ENCODE measurements at regions of chr2 and their contacts with region 1.

Region 1: GRCh38 chr2:54665436-54665856 is 58.0 kb upstream of the EML6 start:
- DNase-seq: peak; percentile 65
- ATAC-seq: peak; percentile 77
- H3K4me3 Mint-ChIP-seq: no peak overlapping the region
- H3K27ac Mint-ChIP-seq: peak overlapping the region; percentile 43
- H3K4me1 Mint-ChIP-seq: peaks cover 14% of the 10 kb centered on the region
- H3K27me3 Mint-ChIP-seq: no peaks in the 10 kb centered on the region

Region 2: DNA sequence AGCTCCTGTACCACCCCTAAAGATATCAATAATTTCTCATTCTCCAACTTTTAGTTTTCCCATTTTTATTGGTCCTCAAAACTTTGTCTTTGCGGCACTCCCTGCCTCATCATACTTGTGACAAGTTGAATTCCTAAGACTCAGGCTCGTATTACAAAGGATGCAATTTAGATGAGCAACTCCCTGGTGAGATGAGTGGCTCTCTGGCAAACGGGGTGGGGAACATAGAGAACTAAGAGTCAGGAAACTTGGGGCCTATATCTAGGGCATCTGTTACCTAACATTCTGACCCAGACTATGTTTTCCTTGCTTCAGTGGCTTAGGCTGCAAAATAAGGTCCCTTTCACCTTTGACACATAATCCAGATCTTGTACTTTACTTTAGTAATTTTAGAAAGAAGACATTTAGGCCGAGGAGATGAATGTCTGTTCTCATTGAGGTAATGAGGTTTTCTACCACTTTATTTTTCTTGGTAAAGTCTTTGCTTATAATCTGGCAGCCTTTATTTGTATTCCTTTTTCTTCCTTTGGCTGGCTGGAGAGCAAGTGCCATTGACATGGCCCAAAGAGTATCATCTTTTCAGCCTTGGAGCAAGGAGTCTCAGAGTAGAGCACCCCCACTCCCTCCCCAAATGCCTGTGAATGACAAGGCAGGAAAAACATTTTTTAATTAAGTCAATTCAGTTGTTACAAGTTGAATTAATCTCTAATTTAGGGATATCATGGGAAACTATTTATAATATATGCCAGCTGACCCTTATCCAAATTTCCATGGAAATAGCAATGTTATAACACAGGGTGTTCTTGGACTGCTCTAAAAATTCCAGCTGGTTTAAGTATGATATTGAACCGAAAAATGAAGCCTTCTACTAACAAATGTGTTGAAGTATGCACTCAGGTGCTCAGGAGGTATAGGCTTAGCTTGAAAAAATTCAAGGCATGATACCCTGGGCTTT is 424.7 kb before region 1 on chr2:
- CTCF ChIA-PET with region 1: no interaction called
- POLR2A ChIA-PET with region 1: no interaction called
- DNase-seq: no peak
- ATAC-seq: no peak
- H3K4me3 Mint-ChIP-seq: no peak overlapping the region
- H3K27ac Mint-ChIP-seq: no peak overlapping the region
- H3K4me1 Mint-ChIP-seq: no peaks in the 10 kb centered on the region
- H3K27me3 Mint-ChIP-seq: no peaks in the 10 kb centered on the region

Region 3: DNA sequence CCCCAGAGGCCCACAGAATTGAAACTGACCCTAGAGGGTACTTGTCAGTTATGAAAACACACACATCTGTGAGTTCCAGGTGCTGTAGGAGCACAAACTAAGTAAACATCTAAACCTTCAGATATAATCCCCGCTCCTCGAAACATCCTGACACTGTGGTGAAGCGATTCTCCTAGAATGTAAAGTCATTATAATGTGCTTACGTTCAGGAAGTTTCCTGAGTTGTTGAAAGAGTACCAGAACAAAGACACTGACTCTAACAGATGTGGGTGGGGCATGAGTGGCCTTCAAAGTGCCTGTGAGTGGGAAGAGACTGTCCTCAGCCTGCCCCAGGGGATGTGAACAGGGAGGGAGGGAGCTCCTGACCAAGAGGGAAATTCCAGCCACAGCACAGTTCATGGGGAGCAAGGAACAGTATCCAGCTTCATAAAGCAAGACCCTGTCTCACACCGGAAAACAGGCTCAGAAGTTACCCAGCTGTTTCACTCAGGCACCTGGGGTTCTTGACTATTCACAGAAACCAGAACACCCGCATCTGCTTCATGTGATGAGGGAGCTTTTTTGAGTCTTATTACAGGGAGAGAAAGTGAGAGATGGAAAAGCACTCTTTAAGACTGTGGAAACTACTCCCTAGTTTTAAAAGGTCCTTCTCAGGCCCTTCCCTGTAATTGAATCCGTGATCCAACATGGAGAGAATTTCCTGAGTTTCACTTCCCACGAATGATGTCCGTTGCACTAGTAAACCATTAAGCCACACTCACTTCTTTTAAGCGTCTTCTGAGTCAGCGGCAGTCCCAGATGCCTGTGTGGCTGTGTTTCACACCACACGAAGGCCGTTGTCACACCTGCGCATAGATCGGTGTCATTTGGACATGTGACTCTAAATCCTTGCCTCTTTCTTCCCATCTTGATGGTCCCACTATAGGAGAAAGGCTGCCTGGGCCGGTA is 30.6 kb before region 1 on chr2:
- CTCF ChIA-PET with region 1: interaction called, 12 read pairs
- POLR2A ChIA-PET with region 1: no interaction called
- DNase-seq: peak; percentile 25
- ATAC-seq: peak; percentile 63
- H3K4me3 Mint-ChIP-seq: no peak overlapping the region
- H3K27ac Mint-ChIP-seq: peak overlapping the region; percentile 71
- H3K4me1 Mint-ChIP-seq: peaks cover 21% of the 10 kb centered on the region
- H3K27me3 Mint-ChIP-seq: no peaks in the 10 kb centered on the region

Region 4: GRCh38 chr2:54641988-54642387 is 23.5 kb before region 1 on chr2:
- CTCF ChIA-PET with region 1: interaction called, 11 read pairs
- POLR2A ChIA-PET with region 1: no interaction called
- DNase-seq: no peak
- ATAC-seq: no peak
- H3K4me3 Mint-ChIP-seq: no peak overlapping the region
- H3K27ac Mint-ChIP-seq: peak overlapping the region; percentile 3
- H3K4me1 Mint-ChIP-seq: peaks cover 8% of the 10 kb centered on the region
- H3K27me3 Mint-ChIP-seq: no peaks in the 10 kb centered on the region

Region 5: DNA sequence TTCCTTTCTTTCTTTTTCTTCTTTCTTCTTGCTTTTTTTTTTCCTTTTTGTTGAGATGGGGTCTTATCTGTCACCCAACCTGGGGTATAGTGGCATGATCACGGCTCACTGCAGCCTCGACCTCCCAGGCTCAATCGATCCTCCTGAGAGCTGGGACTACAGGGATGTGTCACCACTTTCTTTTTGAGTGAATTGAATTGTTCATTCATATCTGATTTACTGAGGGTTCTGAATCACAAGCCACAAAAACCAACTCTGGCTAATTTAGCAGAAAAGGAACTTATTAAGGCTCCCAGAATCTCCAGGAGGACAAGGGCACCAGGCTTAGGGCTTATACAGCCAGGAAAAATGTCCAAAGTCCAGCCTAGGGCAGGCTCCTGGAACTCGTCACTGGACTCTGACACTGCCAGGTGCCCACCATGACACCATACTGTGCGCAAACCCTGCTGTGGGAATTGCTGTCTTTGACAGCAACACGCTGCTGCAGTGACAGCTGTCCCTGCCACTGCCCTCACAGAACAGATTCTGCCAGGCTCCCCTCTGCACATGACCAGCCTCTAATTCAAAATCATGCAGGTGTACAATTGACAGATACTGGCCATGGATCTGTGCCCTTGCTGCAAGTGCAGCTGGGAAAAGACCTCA is 15.1 kb after region 1 on chr2:
- CTCF ChIA-PET with region 1: interaction called, 84 read pairs
- POLR2A ChIA-PET with region 1: interaction called, 3 read pairs
- DNase-seq: peak; percentile 50
- ATAC-seq: peak; percentile 75
- H3K4me3 Mint-ChIP-seq: peak overlapping the region; percentile 68
- H3K27ac Mint-ChIP-seq: peak overlapping the region; percentile 79
- H3K4me1 Mint-ChIP-seq: peaks cover 60% of the 10 kb centered on the region
- H3K27me3 Mint-ChIP-seq: peaks cover 20% of the 10 kb centered on the region

Measured in activated CD8-positive, alpha-beta T cell treated with anti-CD3 and anti-CD28 coated beads, Interleukin-2, amount 10 ng/mL, durations not matched to agents 7 days and 5 days (primary cell).